ENCODE measurements at regions of chr1 and their contacts with region 1.

Region 1: DNA sequence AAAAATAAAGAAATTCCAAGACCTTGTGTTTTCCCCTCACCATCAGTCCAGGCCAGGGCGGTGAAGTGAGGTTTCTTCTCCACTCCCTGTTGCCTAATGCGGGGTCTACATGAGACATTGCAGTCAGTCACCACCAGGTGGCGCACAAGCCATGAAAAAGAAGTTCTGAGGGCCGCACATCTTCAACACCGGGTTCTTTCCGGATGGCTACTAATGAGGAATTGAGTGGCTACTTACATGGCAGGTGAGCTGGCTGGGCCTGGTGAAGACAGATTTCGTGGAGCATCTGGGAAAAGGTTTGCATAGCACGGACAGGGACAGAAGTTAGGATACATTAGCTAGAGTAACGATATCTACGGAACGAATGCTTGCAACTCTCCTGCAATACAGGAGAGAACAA is 15.8 kb upstream of the S100A11 start:
- DNase-seq: peak; percentile 89 to 90
- H3K4me3 ChIP-seq: no peak overlapping the region
- H3K27ac ChIP-seq: no peak overlapping the region
- H3K4me1 ChIP-seq: peaks cover 0 to 14% (median 12%) of the 10 kb centered on the region in 4 donors
- H3K27me3 ChIP-seq: peaks cover 0 to 8% of the 10 kb centered on the region in 2 donors
- CTCF ChIP-seq: peak; percentile 86 to 90

Region 2: DNA sequence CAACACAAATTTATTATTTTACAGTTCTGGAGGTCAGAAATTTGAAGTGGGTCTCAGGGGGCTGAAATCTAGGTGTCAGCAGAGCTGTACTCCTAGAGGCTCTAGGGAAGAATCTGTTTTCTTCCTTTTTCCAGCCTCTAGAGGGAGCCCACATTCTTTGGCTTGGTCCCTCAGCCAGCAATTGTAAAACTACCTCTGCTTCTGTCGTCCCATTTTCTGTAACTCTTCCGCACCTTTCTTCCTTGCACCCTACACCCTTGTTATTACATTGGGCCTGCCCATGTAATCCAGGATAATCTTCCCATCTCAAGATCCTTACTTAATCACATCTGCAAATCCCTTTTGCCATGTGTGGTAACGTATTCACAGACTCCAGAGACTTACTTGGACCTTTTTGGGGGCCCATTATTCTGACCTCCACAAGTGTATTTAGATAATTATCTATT is 118.5 kb before region 1 on chr1:
- intact Hi-C with region 1: no loop called
- DNase-seq: no peak
- H3K4me3 ChIP-seq: no peak overlapping the region
- H3K27ac ChIP-seq: no peak overlapping the region
- H3K4me1 ChIP-seq: no peaks in the 10 kb centered on the region
- H3K27me3 ChIP-seq: no peaks in the 10 kb centered on the region
- CTCF ChIP-seq: peak; percentile 83

Region 3: GRCh38 chr1:151961833-151962232 is 90.8 kb before region 1 on chr1:
- intact Hi-C with region 1: no loop called
- DNase-seq: no peak
- H3K4me3 ChIP-seq: no peak overlapping the region
- H3K27ac ChIP-seq: no peak overlapping the region
- H3K4me1 ChIP-seq: no peaks in the 10 kb centered on the region
- H3K27me3 ChIP-seq: no peaks in the 10 kb centered on the region
- CTCF ChIP-seq: no peak

Region 4: GRCh38 chr1:152182431-152182830 is 129.8 kb after region 1 on chr1:
- intact Hi-C with region 1: loop called (anchors 5 kb)
- DNase-seq: no peak
- H3K4me3 ChIP-seq: no peak overlapping the region
- H3K27ac ChIP-seq: no peak overlapping the region
- H3K4me1 ChIP-seq: peaks cover 0 to 20% (median 14%) of the 10 kb centered on the region in 4 donors
- H3K27me3 ChIP-seq: no peaks in the 10 kb centered on the region
- CTCF ChIP-seq: peak; percentile 13 to 23

Region 5: GRCh38 chr1:152459596-152460528 is 407.3 kb after region 1 on chr1:
- intact Hi-C with region 1: loop called (anchors 5 kb)
- DNase-seq: peak; percentile 56 to 75
- H3K4me3 ChIP-seq: peak overlapping the region; percentile 7 to 13
- H3K27ac ChIP-seq: peak overlapping the region in 1 of 2 donors; percentile 8
- H3K4me1 ChIP-seq: no peaks in the 10 kb centered on the region
- H3K27me3 ChIP-seq: peaks cover 0 to 5% of the 10 kb centered on the region in 2 donors
- CTCF ChIP-seq: peak; percentile 50 to 69

Measured in tibial artery (tissue), 4 donors.